ENCODE measurements at regions of chr5 and their contacts with region 1.

Region 1: DNA sequence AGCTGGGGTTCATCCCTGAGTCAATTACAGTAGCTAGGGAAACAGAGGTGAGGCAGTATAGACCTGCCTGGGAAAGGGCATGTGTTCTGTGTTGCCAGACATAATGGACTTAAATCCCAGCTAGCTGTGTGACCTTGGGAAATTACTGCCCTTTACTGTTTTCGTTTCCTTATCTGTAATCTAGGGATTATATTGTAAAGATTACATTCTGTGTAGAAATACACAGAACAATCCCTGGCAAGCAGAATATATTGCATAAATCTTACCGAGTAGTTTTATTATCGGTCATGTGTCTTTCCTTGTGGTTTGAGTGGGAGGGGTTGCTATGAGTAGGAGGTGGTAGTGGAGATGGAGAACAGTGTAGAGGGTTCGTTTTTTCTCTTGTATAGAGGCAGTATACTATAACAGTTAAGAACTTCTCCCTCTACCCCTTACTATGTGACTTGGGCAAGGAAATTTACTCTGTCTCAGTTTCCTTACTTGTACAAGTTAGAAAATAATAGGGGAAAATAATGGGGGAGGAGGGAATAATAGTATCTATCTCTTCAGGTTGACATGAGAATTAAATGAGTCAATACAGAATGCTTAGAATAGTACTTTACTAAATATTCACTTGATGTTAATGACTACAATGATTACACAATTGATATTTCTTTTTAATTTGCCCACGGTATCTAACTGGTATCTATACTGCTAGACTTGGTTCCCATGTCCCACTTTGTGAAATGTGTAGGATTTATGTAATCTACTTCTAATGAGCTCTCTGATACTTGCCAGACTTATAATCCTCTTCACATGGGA is 7.1 kb upstream of the DMXL1 start:
- DNase-seq: no peak
- H3K4me3 Mint-ChIP-seq: no peak overlapping the region
- H3K27ac Mint-ChIP-seq: peak overlapping the region; percentile 4
- H3K4me1 Mint-ChIP-seq: peaks cover 14% of the 10 kb centered on the region
- H3K27me3 Mint-ChIP-seq: peaks cover 3% of the 10 kb centered on the region

Region 2: GRCh38 chr5:118968925-118969375 is 94.8 kb before region 1 on chr5:
- intact Hi-C with region 1: no loop called
- DNase-seq: no peak
- H3K4me3 Mint-ChIP-seq: no peak overlapping the region
- H3K27ac Mint-ChIP-seq: no peak overlapping the region
- H3K4me1 Mint-ChIP-seq: no peaks in the 10 kb centered on the region
- H3K27me3 Mint-ChIP-seq: peaks cover 3% of the 10 kb centered on the region

Region 3: GRCh38 chr5:119031905-119032304 is 31.9 kb before region 1 on chr5:
- intact Hi-C with region 1: loop called (anchors 2 kb)
- DNase-seq: no peak
- H3K4me3 Mint-ChIP-seq: peak overlapping the region; percentile 3
- H3K27ac Mint-ChIP-seq: peak overlapping the region; percentile 58
- H3K4me1 Mint-ChIP-seq: peaks cover 25% of the 10 kb centered on the region
- H3K27me3 Mint-ChIP-seq: no peaks in the 10 kb centered on the region

Region 4: GRCh38 chr5:119049824-119050449 is 13.8 kb before region 1 on chr5:
- intact Hi-C with region 1: no loop called
- DNase-seq: no peak
- H3K4me3 Mint-ChIP-seq: no peak overlapping the region
- H3K27ac Mint-ChIP-seq: no peak overlapping the region
- H3K4me1 Mint-ChIP-seq: no peaks in the 10 kb centered on the region
- H3K27me3 Mint-ChIP-seq: peaks cover 7% of the 10 kb centered on the region

Measured in activated T-helper 2 cell treated with anti-CD3 and anti-CD28 coated beads, Interferon-gamma antibody, Interleukin-2, Interleukin-4, amounts not matched to agents 10 μg/mL and 5 μg/mL and 100 μg/mL, durations not matched to agents 14 hours and 24 hours and 36 hours (primary cell).